Panc1 (cell line): ENCODE measurements at regions of chr11 and their contacts with region 1.

Region 1: DNA sequence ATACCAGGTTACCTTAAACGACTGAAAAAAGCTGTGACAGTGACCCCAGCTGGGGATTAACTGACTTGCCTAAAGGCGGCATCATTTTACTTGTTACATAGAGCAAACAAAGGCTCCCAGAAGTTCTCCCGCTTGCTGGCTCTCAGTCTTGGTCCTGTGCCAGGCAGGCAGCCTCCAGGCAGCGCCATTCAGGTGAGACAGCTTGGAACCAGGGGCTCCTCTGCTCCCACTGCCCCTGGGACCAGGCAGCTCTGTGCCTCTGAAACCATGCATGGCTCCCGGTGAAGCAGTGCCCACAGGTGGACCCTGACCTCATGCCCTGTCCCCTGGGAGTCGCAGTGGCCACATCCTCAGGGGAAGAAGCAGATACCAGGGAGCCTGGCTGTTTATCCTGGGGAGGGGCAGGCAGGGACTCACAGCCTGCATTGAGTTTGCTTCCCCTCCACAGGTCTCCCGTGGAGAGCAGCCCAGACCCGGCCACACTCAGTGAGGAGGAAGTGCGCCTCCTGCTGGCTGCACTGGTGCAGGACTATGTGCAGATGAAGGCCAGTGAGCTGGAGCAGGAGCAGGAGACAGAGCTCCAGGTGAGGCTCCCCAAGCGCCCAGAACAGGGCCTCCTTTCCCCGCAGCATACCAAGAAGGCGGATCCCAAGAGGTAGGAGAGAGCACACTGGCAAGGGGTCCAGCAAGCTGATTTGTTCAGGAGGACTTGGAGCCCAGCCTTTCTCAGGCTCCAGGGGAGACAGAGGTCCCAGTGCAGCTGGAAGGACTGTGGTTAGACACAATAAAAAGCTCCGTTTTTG is 15.6 kb upstream of the CYP2R1 start:
- DNase-seq: no peak
- ATAC-seq: peak; percentile 80
- H3K4me3 ChIP-seq: peak overlapping the region in 1 of 2 experiments; percentile 25; a peak in 2 of 4 replicates
- H3K27ac ChIP-seq: no peak overlapping the region
- H3K4me1 ChIP-seq: peaks cover 5% of the 10 kb centered on the region
- H3K27me3 ChIP-seq: peaks cover 8% of the 10 kb centered on the region
- CTCF ChIP-seq: peak; percentile 92

Region 2: GRCh38 chr11:14789879-14790484 is 117.6 kb before region 1 on chr11:
- CTCF ChIA-PET with region 1: interaction called, 35 read pairs
- POLR2A ChIA-PET with region 1: no interaction called
- in situ Hi-C with region 1: no loop called
- intact Hi-C with region 1: loop called (anchors 1 kb)
- DNase-seq: no peak
- ATAC-seq: no peak
- H3K4me3 ChIP-seq: no peak overlapping the region
- H3K27ac ChIP-seq: no peak overlapping the region
- H3K4me1 ChIP-seq: no peaks in the 10 kb centered on the region
- H3K27me3 ChIP-seq: no peaks in the 10 kb centered on the region
- CTCF ChIP-seq: peak; percentile 48; the same call in 1 of the 2 replicates

Region 3: DNA sequence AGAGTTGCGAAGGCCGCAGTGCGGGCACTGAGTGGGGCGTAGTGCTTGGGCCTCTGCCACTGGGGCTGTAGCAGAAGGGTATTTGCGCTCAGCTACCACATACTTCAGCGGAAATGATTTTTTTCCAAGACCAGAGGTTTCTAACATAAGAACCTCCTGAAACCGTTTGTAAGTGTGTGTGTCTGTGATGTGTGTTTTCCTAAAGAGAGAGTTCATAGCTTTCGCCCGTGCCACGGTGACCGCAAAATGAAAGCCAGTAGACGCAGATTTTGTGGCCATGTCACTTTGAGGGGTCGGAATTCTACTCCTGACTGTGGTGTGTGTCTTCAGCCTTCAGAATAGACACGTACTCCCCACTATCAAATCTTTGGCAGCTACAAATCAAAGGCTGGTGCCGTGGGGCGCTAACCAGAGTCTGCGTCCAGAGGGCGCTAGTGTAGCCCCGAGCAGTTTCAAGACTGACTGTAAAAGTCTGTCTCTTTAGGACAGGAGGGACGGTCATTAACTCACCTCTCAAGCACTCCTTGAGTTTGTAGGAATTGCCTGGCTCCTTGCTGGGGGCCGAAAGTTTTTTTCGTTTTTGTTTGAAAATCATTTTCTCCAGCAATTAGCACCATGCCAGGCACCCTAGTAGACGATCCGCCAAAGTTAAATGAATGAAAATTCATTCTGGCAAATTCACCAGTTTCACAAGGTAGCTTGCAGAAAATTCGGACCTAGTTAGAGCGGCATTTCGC is 67.1 kb after region 1 on chr11:
- CTCF ChIA-PET with region 1: interaction called, 8 read pairs
- POLR2A ChIA-PET with region 1: no interaction called
- in situ Hi-C with region 1: no loop called
- intact Hi-C with region 1: loop called (anchors 2 kb)
- DNase-seq: peak; percentile 20
- ATAC-seq: peak; percentile 79
- H3K4me3 ChIP-seq: peak overlapping the region in 1 of 2 experiments; percentile 37; a peak in 2 of 4 replicates
- H3K27ac ChIP-seq: no peak overlapping the region
- H3K4me1 ChIP-seq: peaks cover 8% of the 10 kb centered on the region; the same call in 1 of the 2 replicates
- H3K27me3 ChIP-seq: peaks cover 34% of the 10 kb centered on the region
- CTCF ChIP-seq: peak; percentile 89

Region 4: DNA sequence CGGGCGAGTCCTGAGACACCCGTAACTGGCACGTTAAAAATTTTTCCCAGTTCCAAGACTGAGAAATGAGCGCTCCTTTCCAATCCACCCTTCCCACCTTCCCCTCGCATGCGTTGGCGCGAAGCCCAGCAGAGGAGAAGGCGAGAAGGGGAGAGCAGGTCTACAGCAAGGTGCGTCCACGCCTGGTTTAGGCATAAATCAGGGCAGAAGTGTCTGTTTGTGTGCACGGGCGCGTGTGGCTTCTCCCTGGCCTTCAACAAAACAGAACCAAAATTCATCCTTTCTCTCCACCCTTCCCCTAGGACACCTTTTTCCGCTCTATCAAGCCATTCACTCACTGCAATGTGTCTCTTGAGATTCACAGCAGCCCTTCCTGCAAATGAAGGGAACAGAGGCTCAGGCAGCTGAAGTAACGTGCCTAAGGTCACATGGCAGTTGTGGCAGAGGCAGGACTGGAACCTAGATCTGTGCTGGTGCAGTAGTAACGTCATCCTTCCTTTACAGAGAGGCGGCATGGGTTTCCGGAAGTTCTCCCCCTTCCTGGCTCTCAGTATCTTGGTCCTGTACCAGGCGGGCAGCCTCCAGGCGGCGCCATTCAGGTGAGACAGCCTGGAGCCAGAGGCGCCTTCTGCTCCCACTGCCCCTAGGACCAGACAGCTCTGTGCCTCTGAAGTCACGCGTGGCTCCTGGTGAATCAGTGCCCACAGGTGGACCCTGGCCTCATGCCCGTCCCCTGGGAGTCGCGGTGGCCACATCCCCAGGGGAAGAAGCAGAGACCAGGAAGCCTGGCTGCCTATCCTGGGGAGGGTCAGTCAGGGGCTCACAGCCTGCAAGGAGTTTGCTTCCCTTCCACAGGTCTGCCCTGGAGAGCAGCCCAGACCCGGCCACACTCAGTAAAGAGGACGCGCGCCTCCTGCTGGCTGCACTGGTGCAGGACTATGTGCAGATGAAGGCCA is 166.9 kb after region 1 on chr11:
- CTCF ChIA-PET with region 1: interaction called, 44 read pairs
- POLR2A ChIA-PET with region 1: interaction called, 5 read pairs
- in situ Hi-C with region 1: no loop called
- intact Hi-C with region 1: loop called (anchors 1 kb)
- DNase-seq: peak; percentile 33
- ATAC-seq: peak; percentile 95
- H3K4me3 ChIP-seq: peak overlapping the region; percentile 25 to 59
- H3K27ac ChIP-seq: no peak overlapping the region
- H3K4me1 ChIP-seq: 0 out of 2 replicates have a peak, but pooled peaks cover 3% of the 10 kb centered on the region
- H3K27me3 ChIP-seq: peaks cover 6% of the 10 kb centered on the region
- CTCF ChIP-seq: peak; percentile 94